Natural killer cell (primary cell): ENCODE measurements at regions of chr6 and their contacts with region 1.

Region 1: GRCh38 chr6:34027445-34027936 is 118.4 kb downstream of the GRM4 start:
- DNase-seq: peak; percentile 65 to 77
- ATAC-seq: peak; percentile 41 to 78 (median 67)
- H3K4me3 ChIP-seq: no peak overlapping the region
- H3K4me3 Mint-ChIP-seq: no peak overlapping the region
- H3K27ac ChIP-seq: no peak overlapping the region
- H3K27ac Mint-ChIP-seq: no peak overlapping the region
- H3K4me1 ChIP-seq: no peaks in the 10 kb centered on the region
- H3K4me1 Mint-ChIP-seq: no peaks in the 10 kb centered on the region
- H3K27me3 ChIP-seq: no peaks in the 10 kb centered on the region
- H3K27me3 Mint-ChIP-seq: peaks cover 14 to 16% of the 10 kb centered on the region in 2 donors
- CTCF ChIP-seq: peak; percentile 81

Region 2: GRCh38 chr6:33744001-33744848 is 283.3 kb before region 1 on chr6:
- intact Hi-C with region 1: loop called (anchors 1 kb)
- DNase-seq: peak; percentile 66 to 86
- ATAC-seq: peak; percentile 71 to 91 (median 86)
- H3K4me3 ChIP-seq: no peak overlapping the region
- H3K4me3 Mint-ChIP-seq: no peak overlapping the region
- H3K27ac ChIP-seq: no peak overlapping the region
- H3K27ac Mint-ChIP-seq: no peak overlapping the region
- H3K4me1 ChIP-seq: no peaks in the 10 kb centered on the region
- H3K4me1 Mint-ChIP-seq: peaks cover 5% of the 10 kb centered on the region in 2 donors
- H3K27me3 ChIP-seq: no peaks in the 10 kb centered on the region
- H3K27me3 Mint-ChIP-seq: peaks cover 7 to 12% of the 10 kb centered on the region in 2 donors
- CTCF ChIP-seq: peak; percentile 75

Region 3: DNA sequence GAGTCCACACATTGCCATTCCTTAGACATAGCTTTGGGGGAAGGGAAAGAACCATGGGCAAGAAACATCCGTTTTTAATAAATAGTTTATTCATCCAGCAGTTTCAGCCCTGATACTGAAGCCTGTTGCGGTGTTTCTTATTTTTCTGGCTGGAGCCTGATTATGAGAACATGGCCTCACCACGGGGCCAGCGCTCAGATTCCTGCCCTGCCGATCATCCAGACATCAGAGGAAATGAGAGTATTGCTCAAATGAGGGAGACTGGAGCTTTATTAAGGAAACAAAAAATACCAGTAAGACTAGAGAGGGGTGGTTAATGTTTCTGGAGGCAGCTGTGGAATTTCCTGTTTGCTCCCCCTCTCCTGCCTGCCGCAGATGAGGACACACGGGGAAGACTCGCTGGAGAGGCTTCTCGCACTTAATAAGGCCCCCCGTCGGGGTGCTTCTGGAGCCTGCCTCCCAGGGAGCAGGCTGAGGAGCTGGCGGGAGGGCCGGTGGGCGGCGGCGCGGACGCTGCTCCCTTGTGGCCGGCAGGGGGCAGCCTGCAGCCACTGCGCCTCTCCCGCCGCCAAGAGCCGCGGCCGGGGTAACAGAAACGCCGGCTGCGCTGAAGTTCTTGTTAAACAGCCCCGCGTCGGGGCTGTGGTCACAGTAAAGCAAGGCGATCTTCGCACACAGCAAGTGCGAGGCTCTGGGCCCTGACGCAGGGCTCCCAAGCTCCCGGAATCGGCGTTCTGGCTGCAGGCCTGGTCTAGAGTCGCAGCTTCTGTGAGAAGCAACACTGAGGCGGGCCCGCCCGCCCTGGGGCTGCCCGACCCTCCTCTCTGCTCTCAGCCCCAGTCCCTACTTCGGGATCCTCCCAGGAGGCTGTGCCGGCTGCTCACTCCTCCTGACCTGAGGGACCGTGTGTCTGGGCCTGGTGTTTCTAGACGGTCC is 256.1 kb before region 1 on chr6:
- intact Hi-C with region 1: loop called (anchors 1 kb)
- DNase-seq: peak; percentile 64 to 81
- ATAC-seq: peak; percentile 78 to 87 (median 82)
- H3K4me3 ChIP-seq: no peak overlapping the region
- H3K4me3 Mint-ChIP-seq: no peak overlapping the region
- H3K27ac ChIP-seq: no peak overlapping the region
- H3K27ac Mint-ChIP-seq: no peak overlapping the region
- H3K4me1 ChIP-seq: peaks cover 8% of the 10 kb centered on the region
- H3K4me1 Mint-ChIP-seq: peaks cover 5 to 6% of the 10 kb centered on the region in 2 donors
- H3K27me3 ChIP-seq: no peaks in the 10 kb centered on the region
- H3K27me3 Mint-ChIP-seq: peaks cover 6 to 10% of the 10 kb centered on the region in 2 donors
- CTCF ChIP-seq: peak; percentile 88

Region 4: GRCh38 chr6:33856655-33857054 is 170.8 kb before region 1 on chr6:
- intact Hi-C with region 1: loop called (anchors 2 kb)
- DNase-seq: peak; percentile 69 to 82
- ATAC-seq: peak; percentile 77 to 95 (median 84)
- H3K4me3 ChIP-seq: no peak overlapping the region
- H3K4me3 Mint-ChIP-seq: peak overlapping the region; percentile 57
- H3K27ac ChIP-seq: no peak overlapping the region
- H3K27ac Mint-ChIP-seq: no peak overlapping the region
- H3K4me1 ChIP-seq: peaks cover 62% of the 10 kb centered on the region
- H3K4me1 Mint-ChIP-seq: peaks cover 38 to 48% of the 10 kb centered on the region in 2 donors
- H3K27me3 ChIP-seq: peaks cover 92% of the 10 kb centered on the region
- H3K27me3 Mint-ChIP-seq: peaks cover 53 to 54% of the 10 kb centered on the region in 2 donors
- CTCF ChIP-seq: no peak

Region 5: DNA sequence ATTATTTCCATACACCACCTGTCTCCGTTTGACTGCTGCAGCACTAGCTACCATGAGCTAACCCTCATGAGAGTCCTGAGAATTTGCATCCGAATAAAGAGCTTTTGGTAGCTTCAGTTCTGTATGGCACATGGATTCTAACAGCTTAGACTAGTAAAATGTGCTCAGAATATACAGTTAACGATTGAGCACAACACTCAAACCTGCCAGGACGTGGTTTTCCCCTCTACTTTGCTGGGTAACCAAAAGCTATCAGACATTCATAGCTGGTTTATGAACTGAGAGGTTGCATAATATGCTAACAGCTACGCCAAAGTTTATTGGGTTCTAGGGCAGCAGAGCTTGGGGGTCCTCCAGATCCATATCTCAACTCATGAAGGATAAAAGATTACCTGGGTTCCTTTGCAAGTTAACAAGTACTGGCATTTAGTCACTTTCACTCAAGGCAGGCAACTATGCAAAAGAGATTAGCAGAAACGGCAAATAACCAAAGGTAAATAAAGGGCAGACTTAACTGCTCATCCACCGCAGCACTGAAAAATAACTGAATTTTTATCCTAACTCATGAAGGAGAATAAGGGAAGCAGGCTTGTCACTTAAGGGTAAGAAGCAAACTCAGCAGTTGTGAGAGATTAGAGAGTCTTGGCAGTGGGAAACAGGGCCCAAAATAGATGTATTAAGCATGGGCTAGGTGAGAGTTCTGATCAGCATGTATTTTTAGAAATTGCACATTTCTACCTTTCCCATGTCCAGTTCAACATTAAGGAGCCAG is 335.6 kb after region 1 on chr6:
- intact Hi-C with region 1: no loop called
- DNase-seq: no peak
- ATAC-seq: peak in 2 of 3 donors; percentile 24 to 61
- H3K4me3 ChIP-seq: no peak overlapping the region
- H3K4me3 Mint-ChIP-seq: no peak overlapping the region
- H3K27ac ChIP-seq: no peak overlapping the region
- H3K27ac Mint-ChIP-seq: peak overlapping the region; percentile 15 to 65
- H3K4me1 ChIP-seq: no peaks in the 10 kb centered on the region
- H3K4me1 Mint-ChIP-seq: peaks cover 41 to 49% of the 10 kb centered on the region in 2 donors
- H3K27me3 ChIP-seq: no peaks in the 10 kb centered on the region
- H3K27me3 Mint-ChIP-seq: no peaks in the 10 kb centered on the region
- CTCF ChIP-seq: no peak